ENCODE measurements at regions of chr12 and their contacts with region 1.

Region 1: GRCh38 chr12:57452937-57453509 is 2.1 kb upstream of the INHBE start:
- DNase-seq: peak; percentile 59
- H3K4me3 Mint-ChIP-seq: no peak overlapping the region
- H3K27ac Mint-ChIP-seq: no peak overlapping the region
- H3K4me1 Mint-ChIP-seq: peaks cover 11% of the 10 kb centered on the region
- H3K27me3 Mint-ChIP-seq: no peaks in the 10 kb centered on the region

Region 2: GRCh38 chr12:57229634-57230380 is 223.2 kb before region 1 on chr12 and contains the start of gene SHMT2:
- CTCF ChIA-PET with region 1: interaction called, 10 read pairs
- POLR2A ChIA-PET with region 1: no interaction called
- DNase-seq: peak; percentile 96
- H3K4me3 Mint-ChIP-seq: peak within 1 kb of the TSS; percentile 97
- H3K27ac Mint-ChIP-seq: peak within 1 kb of the TSS; percentile 96
- H3K4me1 Mint-ChIP-seq: peaks cover 68% of the 10 kb centered on the region
- H3K27me3 Mint-ChIP-seq: peaks cover 25% of the 10 kb centered on the region
- total RNA-seq, gene SHMT2: 137 to 141 TPM

Region 3: DNA sequence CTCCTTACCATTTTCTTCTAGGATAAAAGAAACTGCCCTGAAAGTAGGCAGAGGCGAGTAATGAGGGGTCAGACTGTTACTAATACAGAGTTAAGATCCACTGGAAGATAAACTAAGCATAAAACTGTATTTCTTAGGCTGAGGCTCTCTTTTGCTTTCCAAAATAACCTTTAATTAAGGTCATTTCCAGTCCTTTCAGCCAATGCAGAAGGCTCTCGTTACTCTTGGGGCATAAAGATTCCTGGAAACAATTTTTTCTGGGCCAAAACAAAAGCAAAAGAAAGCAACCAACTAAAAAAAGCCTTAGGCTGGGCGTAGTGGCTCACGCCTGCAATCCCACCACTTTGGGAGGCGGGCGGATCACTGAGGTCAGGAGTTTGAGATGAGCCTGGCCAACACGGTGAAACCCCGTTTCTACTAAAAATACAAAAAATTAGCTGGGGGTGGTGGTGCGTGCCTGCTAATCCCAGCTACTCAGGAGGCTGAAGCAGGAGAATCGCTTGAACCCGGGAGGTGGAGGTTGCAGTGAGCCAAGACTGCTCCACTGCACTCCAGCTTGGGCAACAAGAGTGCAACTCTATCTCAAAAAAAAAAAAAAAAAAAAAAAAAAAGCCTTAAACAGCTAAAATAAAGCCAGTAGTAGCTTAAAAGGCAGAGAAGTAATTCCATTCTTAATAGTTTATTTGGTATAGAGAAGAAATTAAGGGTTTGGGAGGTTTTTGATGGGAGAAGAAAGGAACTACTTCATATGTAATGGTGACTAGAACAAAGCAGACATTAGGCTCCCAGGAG is 133.1 kb before region 1 on chr12:
- CTCF ChIA-PET with region 1: interaction called, 3 read pairs
- POLR2A ChIA-PET with region 1: interaction called, 11 read pairs
- DNase-seq: no peak
- H3K4me3 Mint-ChIP-seq: no peak overlapping the region
- H3K27ac Mint-ChIP-seq: no peak overlapping the region
- H3K4me1 Mint-ChIP-seq: no peaks in the 10 kb centered on the region
- H3K27me3 Mint-ChIP-seq: no peaks in the 10 kb centered on the region

Region 4: GRCh38 chr12:57368349-57369095 is 84.5 kb before region 1 on chr12:
- CTCF ChIA-PET with region 1: no interaction called
- POLR2A ChIA-PET with region 1: no interaction called
- DNase-seq: no peak
- H3K4me3 Mint-ChIP-seq: no peak overlapping the region
- H3K27ac Mint-ChIP-seq: peak overlapping the region; percentile 26
- H3K4me1 Mint-ChIP-seq: no peaks in the 10 kb centered on the region
- H3K27me3 Mint-ChIP-seq: no peaks in the 10 kb centered on the region

Region 5: GRCh38 chr12:57441846-57442427 is 11.1 kb before region 1 on chr12:
- CTCF ChIA-PET with region 1: interaction called, 31 read pairs
- POLR2A ChIA-PET with region 1: no interaction called
- DNase-seq: no peak
- H3K4me3 Mint-ChIP-seq: no peak overlapping the region
- H3K27ac Mint-ChIP-seq: no peak overlapping the region
- H3K4me1 Mint-ChIP-seq: no peaks in the 10 kb centered on the region
- H3K27me3 Mint-ChIP-seq: peaks cover 11% of the 10 kb centered on the region

Region 6: DNA sequence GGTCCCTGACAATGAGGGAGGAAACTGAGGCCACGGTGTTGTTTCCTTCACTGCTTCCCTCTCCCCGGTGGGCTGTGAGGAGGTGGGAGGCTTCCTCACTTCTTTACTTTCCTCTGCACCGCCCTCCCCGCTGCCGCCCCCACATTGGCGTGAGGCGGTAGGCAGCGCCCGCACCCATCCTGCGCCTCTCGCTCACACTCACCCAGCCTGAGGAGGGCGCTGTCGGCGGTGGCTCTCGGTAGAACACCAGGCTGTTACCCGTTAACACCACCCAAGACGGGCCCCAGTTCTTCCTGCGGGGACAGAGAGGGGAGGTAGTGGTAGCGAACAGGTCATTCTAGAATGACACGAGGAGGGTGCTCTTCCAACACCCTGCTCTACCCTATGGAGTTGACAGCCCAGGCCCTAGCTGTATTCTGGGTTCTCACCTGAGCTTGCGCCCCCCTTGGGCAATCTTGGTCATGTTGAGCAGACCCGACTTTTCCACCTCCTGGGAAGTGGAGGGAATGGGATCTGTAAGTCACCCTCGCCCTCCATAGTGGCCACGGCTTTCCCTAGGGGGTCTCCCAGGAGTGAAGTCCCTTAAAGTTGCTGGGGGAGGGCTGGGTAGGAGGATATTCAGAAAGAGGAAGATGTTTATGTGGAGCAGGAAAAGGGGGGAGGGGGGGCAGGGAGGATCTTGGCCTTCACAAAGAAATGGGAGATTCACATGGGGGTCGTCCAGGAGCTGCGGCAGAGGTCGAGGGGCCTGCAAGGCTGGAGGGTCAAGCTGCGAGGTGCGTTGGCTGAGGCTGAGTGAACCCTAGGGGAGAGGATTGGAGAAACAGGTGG is 23.4 kb after region 1 on chr12:
- CTCF ChIA-PET with region 1: interaction called, 14 read pairs
- POLR2A ChIA-PET with region 1: no interaction called
- DNase-seq: peak; percentile 80
- H3K4me3 Mint-ChIP-seq: peak overlapping the region; percentile 91
- H3K27ac Mint-ChIP-seq: peak overlapping the region; percentile 93
- H3K4me1 Mint-ChIP-seq: peaks cover 69% of the 10 kb centered on the region
- H3K27me3 Mint-ChIP-seq: no peaks in the 10 kb centered on the region

Region 7: GRCh38 chr12:57546438-57547383 is 93.7 kb after region 1 on chr12 and contains the start of gene DCTN2:
- CTCF ChIA-PET with region 1: no interaction called
- POLR2A ChIA-PET with region 1: no interaction called
- DNase-seq: peak; percentile 97
- H3K4me3 Mint-ChIP-seq: peak within 1 kb of the TSS; percentile 92
- H3K27ac Mint-ChIP-seq: peak within 1 kb of the TSS; percentile 93
- H3K4me1 Mint-ChIP-seq: peaks cover 51% of the 10 kb centered on the region
- H3K27me3 Mint-ChIP-seq: peaks cover 14% of the 10 kb centered on the region
- total RNA-seq, gene DCTN2: 79.3 to 80.5 TPM

Measured in activated CD4-positive, alpha-beta T cell treated with anti-CD3 and anti-CD28 coated beads, Interleukin-2, amount 10 ng/mL, durations not matched to agents 7 days and 5 days (primary cell).